Activated CD8-positive, alpha-beta memory T cell treated with anti-CD3 and anti-CD28 coated beads, Interleukin-2, amount 10 ng/mL, durations not matched to agents 7 days and 5 days (primary cell): ENCODE measurements at regions of chr14 and their contacts with region 1.

Region 1: DNA sequence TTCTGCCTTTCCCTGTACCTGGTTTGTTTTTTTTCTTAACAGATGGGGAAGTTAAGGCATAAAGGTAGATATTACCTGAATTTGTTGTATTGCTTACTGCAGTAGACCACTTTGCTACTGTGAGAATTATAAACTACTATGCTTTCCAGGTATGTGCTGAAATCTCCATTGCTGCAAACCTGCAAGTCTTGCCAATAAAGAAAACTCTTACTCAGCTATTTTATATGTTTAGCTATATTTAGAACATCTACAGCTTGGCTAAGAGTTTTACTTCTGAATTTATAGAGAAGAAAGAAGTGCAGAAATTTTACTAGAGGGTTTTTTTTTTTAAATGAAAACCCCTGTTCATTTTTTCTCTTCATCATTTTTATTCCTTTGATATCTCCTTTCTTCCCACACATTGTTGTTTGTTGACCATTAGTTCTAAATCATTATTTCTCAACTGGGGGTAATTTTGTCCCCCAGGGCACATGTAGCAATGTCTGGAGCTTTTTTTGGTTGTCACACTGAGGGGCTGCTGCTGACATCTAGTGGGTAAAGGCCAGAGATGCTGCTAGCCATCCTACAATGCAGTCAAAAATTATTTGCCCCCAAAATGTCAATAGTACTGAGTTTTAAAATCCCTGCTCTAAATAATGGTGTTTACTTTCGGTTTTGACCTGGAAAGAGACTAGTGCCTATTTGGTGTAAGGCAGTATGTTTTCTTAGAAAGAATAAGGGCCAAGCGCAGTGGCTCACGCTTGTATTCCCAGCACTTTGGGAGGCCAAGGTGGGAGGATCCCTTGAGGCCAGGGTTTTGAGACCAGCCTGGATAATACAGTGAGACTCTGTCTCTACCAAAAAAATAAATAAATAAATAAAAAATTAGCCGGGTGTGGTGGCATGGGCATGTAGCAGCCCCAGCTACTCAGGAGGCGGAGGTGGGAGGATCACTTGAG is 48.6 kb downstream of the PCNX1 start:
- DNase-seq: peak; percentile 64
- ATAC-seq: peak; percentile 92
- H3K4me3 Mint-ChIP-seq: no peak overlapping the region
- H3K27ac Mint-ChIP-seq: peak overlapping the region; percentile 17
- H3K4me1 Mint-ChIP-seq: peaks cover 27% of the 10 kb centered on the region
- H3K27me3 Mint-ChIP-seq: no peaks in the 10 kb centered on the region

Region 2: GRCh38 chr14:70821584-70822529 is 134.0 kb before region 1 on chr14:
- CTCF ChIA-PET with region 1: interaction called, 90 read pairs
- DNase-seq: peak; percentile 62
- ATAC-seq: peak; percentile 65
- H3K4me3 Mint-ChIP-seq: peak overlapping the region; percentile 71
- H3K27ac Mint-ChIP-seq: peak overlapping the region; percentile 24
- H3K4me1 Mint-ChIP-seq: peaks cover 28% of the 10 kb centered on the region
- H3K27me3 Mint-ChIP-seq: peaks cover 25% of the 10 kb centered on the region

Region 3: DNA sequence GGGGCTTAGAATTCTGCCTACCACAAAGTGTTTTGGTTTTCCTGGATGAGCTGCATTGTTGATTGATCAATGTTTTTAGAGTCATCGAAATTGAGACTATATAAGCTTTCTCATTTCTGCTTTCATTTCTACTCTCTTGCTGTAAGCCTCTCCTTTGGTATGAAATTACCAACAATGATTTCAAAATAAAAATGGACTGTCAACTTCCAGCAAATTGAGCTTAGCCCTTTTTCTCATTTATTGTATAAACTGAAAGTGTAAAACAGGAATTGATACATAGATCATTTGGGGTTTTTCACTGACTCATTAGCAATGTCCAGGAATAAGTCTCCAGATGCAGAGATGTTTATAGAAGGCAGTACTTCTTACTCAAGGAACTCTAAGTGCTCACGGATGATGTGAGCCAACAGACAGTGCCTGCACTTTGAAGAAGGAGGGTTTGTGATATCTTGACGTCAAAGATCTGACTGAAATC is 68.6 kb before region 1 on chr14:
- CTCF ChIA-PET with region 1: interaction called, 45 read pairs
- DNase-seq: no peak
- ATAC-seq: peak; percentile 21
- H3K4me3 Mint-ChIP-seq: peak overlapping the region; percentile 65
- H3K27ac Mint-ChIP-seq: peak overlapping the region; percentile 96
- H3K4me1 Mint-ChIP-seq: peaks cover 87% of the 10 kb centered on the region
- H3K27me3 Mint-ChIP-seq: no peaks in the 10 kb centered on the region

Region 4: DNA sequence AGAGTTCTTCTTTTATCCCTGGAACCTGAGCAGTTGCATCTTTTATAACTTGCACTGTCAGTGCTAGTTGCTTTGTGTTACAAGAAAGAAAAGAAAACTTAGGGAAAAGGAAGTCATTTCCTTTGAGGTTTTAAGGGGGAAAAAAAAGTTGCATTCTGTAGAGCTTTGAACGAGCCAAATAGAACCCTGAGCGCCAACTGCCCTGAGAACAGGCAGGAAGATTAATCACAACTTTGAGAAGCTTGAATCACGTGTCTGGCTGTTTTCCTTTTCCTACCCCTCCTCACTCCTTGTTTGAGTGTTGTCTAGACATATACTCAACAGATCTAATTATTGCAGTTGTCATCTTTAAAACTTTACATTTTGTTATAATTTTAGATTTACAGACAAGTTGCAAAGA is 36.0 kb before region 1 on chr14:
- CTCF ChIA-PET with region 1: interaction called, 12 read pairs
- DNase-seq: no peak
- ATAC-seq: no peak
- H3K4me3 Mint-ChIP-seq: peak overlapping the region; percentile 30
- H3K27ac Mint-ChIP-seq: peak overlapping the region; percentile 83
- H3K4me1 Mint-ChIP-seq: peaks cover 78% of the 10 kb centered on the region
- H3K27me3 Mint-ChIP-seq: no peaks in the 10 kb centered on the region

Region 5: DNA sequence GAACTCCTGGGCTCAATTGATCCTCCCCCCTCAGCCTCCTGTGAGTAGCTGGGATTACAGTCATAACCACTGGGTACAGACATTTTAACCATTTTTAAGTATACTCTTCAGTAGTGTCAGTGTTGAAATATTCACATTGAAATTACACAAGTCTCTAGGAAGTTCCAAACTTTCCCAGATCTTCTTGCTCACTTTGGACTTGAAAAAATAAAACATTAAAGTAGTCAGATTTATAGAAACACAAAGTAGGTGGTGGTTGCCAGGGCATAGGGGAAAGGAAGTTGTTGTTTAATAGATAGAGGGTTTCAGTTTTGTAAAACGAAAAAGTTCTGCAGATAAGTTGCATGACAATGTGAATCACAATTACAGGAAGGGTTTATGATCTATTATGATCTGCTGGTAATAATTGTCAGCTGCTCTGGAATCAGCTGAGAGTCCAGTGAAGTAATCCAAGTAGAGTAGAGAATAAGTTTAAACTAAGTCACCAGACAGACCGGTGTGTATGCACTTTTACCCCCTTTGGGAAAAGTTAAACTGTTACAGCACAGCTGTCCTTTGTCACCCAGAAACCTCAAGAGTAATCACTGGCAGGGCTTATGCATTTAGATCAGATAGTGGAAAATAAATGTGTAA is 21.2 kb before region 1 on chr14:
- CTCF ChIA-PET with region 1: interaction called, 11 read pairs
- DNase-seq: no peak
- ATAC-seq: peak; percentile 82
- H3K4me3 Mint-ChIP-seq: peak overlapping the region; percentile 55
- H3K27ac Mint-ChIP-seq: peak overlapping the region; percentile 93
- H3K4me1 Mint-ChIP-seq: peaks cover 54% of the 10 kb centered on the region
- H3K27me3 Mint-ChIP-seq: no peaks in the 10 kb centered on the region

Region 6: GRCh38 chr14:70942342-70942706 is 13.5 kb before region 1 on chr14:
- CTCF ChIA-PET with region 1: interaction called, 17 read pairs
- DNase-seq: no peak
- ATAC-seq: no peak
- H3K4me3 Mint-ChIP-seq: no peak overlapping the region
- H3K27ac Mint-ChIP-seq: peak overlapping the region; percentile 37
- H3K4me1 Mint-ChIP-seq: peaks cover 54% of the 10 kb centered on the region
- H3K27me3 Mint-ChIP-seq: no peaks in the 10 kb centered on the region

Region 7: DNA sequence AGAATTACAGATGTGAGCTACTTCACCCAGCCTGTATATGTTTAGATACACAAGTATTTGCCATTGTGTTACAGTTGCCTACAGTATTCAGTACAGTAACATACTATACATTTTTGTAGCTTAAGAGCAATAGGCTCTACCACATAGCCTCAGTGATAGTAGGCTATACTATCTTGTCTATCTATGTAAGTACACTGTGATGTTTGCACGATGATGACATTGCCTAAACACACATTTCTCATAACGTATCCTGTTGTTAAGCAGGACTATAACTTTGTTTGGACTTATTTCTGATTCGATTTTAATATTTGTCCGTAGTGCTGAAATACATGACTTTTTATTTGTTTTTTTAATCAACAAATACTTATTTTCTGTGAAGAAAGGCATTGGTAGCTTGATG is 80.6 kb after region 1 on chr14:
- CTCF ChIA-PET with region 1: no interaction called
- DNase-seq: no peak
- ATAC-seq: no peak
- H3K4me3 Mint-ChIP-seq: no peak overlapping the region
- H3K27ac Mint-ChIP-seq: no peak overlapping the region
- H3K4me1 Mint-ChIP-seq: no peaks in the 10 kb centered on the region
- H3K27me3 Mint-ChIP-seq: no peaks in the 10 kb centered on the region

Region 8: DNA sequence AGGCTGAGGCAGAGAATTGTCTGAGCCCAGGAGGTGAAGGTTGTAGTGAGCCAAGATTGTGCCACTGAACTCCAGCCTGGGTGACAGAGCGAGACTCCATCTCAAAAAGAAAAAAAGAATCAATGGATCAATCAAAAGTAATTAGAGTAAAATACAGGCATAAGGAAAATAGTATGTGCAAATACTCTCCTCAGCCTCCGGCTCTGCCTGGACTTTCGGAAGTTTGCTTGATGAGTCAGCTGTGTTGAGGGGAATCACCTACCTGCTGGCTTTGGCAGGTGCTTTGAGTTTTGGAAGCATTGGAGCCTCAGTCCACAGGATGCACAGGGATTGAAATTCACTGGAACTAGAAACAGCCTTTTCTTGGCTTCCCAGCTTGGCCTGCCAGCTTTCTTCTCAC is 219.6 kb after region 1 on chr14:
- CTCF ChIA-PET with region 1: no interaction called
- DNase-seq: no peak
- ATAC-seq: no peak
- H3K4me3 Mint-ChIP-seq: no peak overlapping the region
- H3K27ac Mint-ChIP-seq: no peak overlapping the region
- H3K4me1 Mint-ChIP-seq: peaks cover 2% of the 10 kb centered on the region
- H3K27me3 Mint-ChIP-seq: peaks cover 12% of the 10 kb centered on the region